HAP-1 (cell line): ENCODE measurements at regions of chr1 and their contacts with region 1.

Region 1: DNA sequence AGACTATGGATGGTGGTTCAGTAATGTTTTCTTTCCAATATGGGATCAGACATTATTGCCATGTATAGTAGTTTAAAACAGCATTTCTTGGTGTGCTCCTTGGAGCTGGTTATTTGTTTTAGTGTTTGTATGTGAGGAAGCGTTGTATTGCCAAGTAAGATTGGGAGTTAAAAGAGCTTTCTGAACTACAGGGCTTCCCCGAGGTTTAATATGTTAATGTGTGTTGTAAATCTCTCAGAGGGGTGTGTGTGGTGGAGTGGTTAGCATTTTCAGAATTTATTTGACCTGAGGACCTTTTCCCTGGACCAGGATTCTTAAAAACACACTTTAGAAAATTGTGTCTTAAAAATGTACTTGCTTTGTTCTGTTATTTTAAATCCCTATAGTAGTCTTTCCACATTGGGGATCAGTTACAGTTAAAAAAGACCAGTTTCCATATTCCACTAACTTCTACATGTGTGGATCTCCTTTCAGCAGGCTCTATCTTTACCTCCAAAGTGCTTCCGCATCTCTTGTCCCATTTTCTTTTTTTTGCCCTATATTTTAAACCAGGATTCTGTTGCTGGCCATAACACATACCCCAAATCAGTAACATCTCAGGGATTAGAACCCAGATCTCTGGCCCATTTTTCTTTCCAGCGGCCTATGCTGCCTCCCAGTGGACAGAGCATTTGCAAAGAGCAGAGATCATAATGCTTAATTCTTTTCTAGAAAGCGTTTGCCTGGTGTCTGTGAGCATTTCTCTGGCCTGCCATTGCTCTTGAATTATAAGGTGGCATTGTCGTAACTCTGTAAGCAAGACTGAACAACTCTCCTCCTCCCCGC is 58.6 kb downstream of the PBX1 start:
- DNase-seq: peak; percentile 48 to 64
- H3K4me3 ChIP-seq: no peak overlapping the region
- H3K4me1 ChIP-seq: peaks cover 14% of the 10 kb centered on the region
- H3K27me3 ChIP-seq: no peaks in the 10 kb centered on the region

Region 2: GRCh38 chr1:164361927-164362326 is 255.7 kb before region 1 on chr1:
- in situ Hi-C with region 1: no loop called
- DNase-seq: no peak
- H3K4me3 ChIP-seq: no peak overlapping the region
- H3K4me1 ChIP-seq: no peaks in the 10 kb centered on the region
- H3K27me3 ChIP-seq: no peaks in the 10 kb centered on the region; the same call in 1 of the 2 replicates

Region 3: GRCh38 chr1:164651351-164651951 is 33.9 kb after region 1 on chr1:
- in situ Hi-C with region 1: loop called (anchors 5 kb)
- DNase-seq: peak in 1 of 2 experiments; percentile 40
- H3K4me3 ChIP-seq: no peak overlapping the region
- H3K4me1 ChIP-seq: peaks cover 28% of the 10 kb centered on the region
- H3K27me3 ChIP-seq: no peaks in the 10 kb centered on the region

Region 4: GRCh38 chr1:164707868-164708331 is 90.3 kb after region 1 on chr1:
- in situ Hi-C with region 1: no loop called
- DNase-seq: no peak
- H3K4me3 ChIP-seq: no peak overlapping the region
- H3K4me1 ChIP-seq: peaks cover 5% of the 10 kb centered on the region
- H3K27me3 ChIP-seq: no peaks in the 10 kb centered on the region

Region 5: DNA sequence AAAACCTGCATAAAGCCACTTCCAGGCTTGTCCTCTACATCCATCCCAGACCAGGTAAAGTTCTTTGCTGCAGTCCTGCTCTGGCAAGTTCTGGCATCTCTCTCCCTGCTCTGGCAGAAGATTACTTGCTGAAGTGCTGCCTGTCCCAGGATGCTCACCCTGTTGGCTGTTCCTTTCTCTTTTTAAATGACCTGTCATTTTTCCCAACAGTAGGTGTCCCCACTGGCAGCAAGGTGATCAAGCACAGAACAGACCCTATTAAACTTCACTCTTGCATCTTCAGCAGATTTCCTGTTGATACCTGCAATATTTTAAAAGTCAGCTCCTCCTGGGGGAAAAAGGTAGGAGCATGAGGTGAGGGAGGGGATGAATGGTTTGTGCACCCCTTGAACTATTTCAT is 274.0 kb after region 1 on chr1:
- in situ Hi-C with region 1: no loop called
- DNase-seq: no peak
- H3K4me3 ChIP-seq: no peak overlapping the region
- H3K4me1 ChIP-seq: no peaks in the 10 kb centered on the region
- H3K27me3 ChIP-seq: no peaks in the 10 kb centered on the region